ENCODE measurements at regions of chr19 and their contacts with region 1.

Region 1: GRCh38 chr19:41397086-41398049 is at the starts of genes BCKDHA and EXOSC5:
- DNase-seq: peak; percentile 96 to 100 (median 98)
- ATAC-seq: peak; percentile 97
- H3K4me3 ChIP-seq: peak within 1 kb of the TSS; percentile 73
- H3K27ac ChIP-seq: peak within 1 kb of the TSS; percentile 95
- H3K4me1 ChIP-seq: peaks cover 15 to 22% of the 10 kb centered on the region in 2 experiments; a peak in 4 of 5 replicates
- H3K27me3 ChIP-seq: no peaks in the 10 kb centered on the region
- CTCF ChIP-seq: no peak
- EP300 ChIP-seq: no peak; the same call in 1 of the 2 replicates
- POLR2A ChIP-seq: peak; percentile 86
- RAD21 ChIP-seq: peak in 1 of 2 experiments; percentile 10; a peak in 1 of 4 replicates
- polyA plus RNA-seq, gene BCKDHA: 4.5 to 6.4 TPM
- polyA plus RNA-seq, gene EXOSC5: 15.1 to 41.8 TPM

Region 2: DNA sequence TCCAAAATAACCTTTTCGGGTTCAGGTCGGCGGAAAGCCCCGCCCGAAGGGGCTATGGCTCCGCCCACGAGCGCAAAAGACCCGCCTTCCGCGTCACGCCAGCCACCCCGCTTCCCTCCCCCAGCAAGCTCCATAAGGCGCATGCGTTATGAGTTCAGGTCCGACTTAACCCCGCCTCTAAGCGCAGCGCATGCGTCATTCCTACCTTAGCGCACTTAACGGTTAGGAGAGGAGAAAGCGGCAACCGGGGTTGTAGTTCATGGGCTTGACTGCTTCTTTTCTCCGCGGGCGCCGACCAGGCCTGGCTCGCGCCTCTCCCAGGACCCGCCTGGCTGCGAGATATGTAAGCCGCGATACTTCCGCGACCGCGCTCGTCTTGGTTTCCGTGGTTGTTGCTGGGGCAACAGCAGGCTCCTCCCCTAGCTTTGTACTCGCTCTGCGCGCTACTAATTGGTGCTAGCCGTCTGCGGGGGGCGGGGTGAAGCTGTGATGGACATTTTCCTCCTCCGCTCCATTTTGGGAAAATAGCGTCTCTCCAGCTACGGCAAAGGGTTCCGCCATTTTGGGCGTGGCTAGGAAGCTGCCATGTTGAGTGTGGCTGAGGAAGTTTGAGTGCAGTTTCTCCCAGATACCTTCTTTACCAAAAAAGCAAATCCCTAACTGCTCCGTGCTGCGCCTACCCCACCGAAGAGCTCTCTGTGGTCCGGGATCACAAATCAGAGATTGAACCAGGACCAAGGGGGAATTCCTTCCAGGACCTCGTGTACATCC is 33.4 kb before region 1 on chr19 and contains the start of gene B9D2:
- CTCF ChIA-PET with region 1: no interaction called
- POLR2A ChIA-PET with region 1: interaction called, 4 read pairs
- in situ Hi-C with region 1: no loop called
- intact Hi-C with region 1: loop called (anchors 2 kb)
- DNase-seq: peak; percentile 97 to 99 (median 98)
- ATAC-seq: peak; percentile 94
- H3K4me3 ChIP-seq: peak within 1 kb of the TSS; percentile 80
- H3K27ac ChIP-seq: peak within 1 kb of the TSS; percentile 100
- H3K4me1 ChIP-seq: peaks cover 30 to 46% of the 10 kb centered on the region in 2 experiments
- H3K27me3 ChIP-seq: no peaks in the 10 kb centered on the region
- CTCF ChIP-seq: peak in 1 of 3 experiments; percentile 6; a peak in 1 of 6 replicates
- EP300 ChIP-seq: no peak
- POLR2A ChIP-seq: peak; percentile 93
- RAD21 ChIP-seq: 0 out of 4 replicates have a peak, but pooled peaks of 1 of the 2 experiments have one; percentile 10
- polyA plus RNA-seq, gene B9D2: 0.83 to 1.4 TPM

Region 3: GRCh38 chr19:41409288-41409687 is 11.9 kb after region 1 on chr19:
- CTCF ChIA-PET with region 1: no interaction called
- POLR2A ChIA-PET with region 1: interaction called, 12 read pairs
- in situ Hi-C with region 1: no loop called
- intact Hi-C with region 1: no loop called
- DNase-seq: peak in 2 of 4 experiments; percentile 22 to 49
- ATAC-seq: peak; percentile 53
- H3K4me3 ChIP-seq: no peak overlapping the region
- H3K27ac ChIP-seq: 0 out of 3 replicates have a peak overlapping the region, but pooled peaks have one; percentile 25
- H3K4me1 ChIP-seq: peaks cover 7 to 12% of the 10 kb centered on the region in 2 experiments; a peak in 4 of 5 replicates
- H3K27me3 ChIP-seq: no peaks in the 10 kb centered on the region
- CTCF ChIP-seq: no peak
- EP300 ChIP-seq: no peak
- POLR2A ChIP-seq: no peak
- RAD21 ChIP-seq: no peak

Region 4: GRCh38 chr19:41426952-41427646 is 29.7 kb after region 1 on chr19 and contains the start of gene B3GNT8:
- CTCF ChIA-PET with region 1: no interaction called
- POLR2A ChIA-PET with region 1: interaction called, 3 read pairs
- in situ Hi-C with region 1: no loop called
- intact Hi-C with region 1: loop called (anchors 5 kb)
- DNase-seq: peak; percentile 92 to 94 (median 94)
- ATAC-seq: peak; percentile 96
- H3K4me3 ChIP-seq: peak within 1 kb of the TSS; percentile 35
- H3K27ac ChIP-seq: peak within 1 kb of the TSS; percentile 79
- H3K4me1 ChIP-seq: peaks cover 23 to 56% of the 10 kb centered on the region in 2 experiments
- H3K27me3 ChIP-seq: no peaks in the 10 kb centered on the region
- CTCF ChIP-seq: no peak
- EP300 ChIP-seq: no peak
- POLR2A ChIP-seq: peak; percentile 51
- RAD21 ChIP-seq: no peak
- polyA plus RNA-seq, gene B3GNT8: 0.11 TPM in 1 of 2 experiments, not detected in the other

Measured in K562 (cell line).